ENCODE measurements at regions of chr3 and their contacts with region 1.

Region 1: GRCh38 chr3:194315088-194315964 is 35.8 kb downstream of the CPN2 start:
- DNase-seq: peak; percentile 88 to 93 (median 90)
- ATAC-seq: peak; percentile 93
- H3K4me3 ChIP-seq: peak overlapping the region; percentile 47
- H3K27ac ChIP-seq: peak overlapping the region; percentile 42; the same call in 1 of the 3 replicates
- H3K4me1 ChIP-seq: peaks cover 12 to 14% of the 10 kb centered on the region in 2 experiments
- H3K27me3 ChIP-seq: no peaks in the 10 kb centered on the region
- CTCF ChIP-seq: peak; percentile 87 to 94 (median 92)
- EP300 ChIP-seq: no peak
- POLR2A ChIP-seq: no peak
- RAD21 ChIP-seq: peak; percentile 97 to 99

Region 2: GRCh38 chr3:192802957-192803899 is 1512.1 kb before region 1 on chr3:
- CTCF ChIA-PET with region 1: no interaction called
- POLR2A ChIA-PET with region 1: no interaction called
- in situ Hi-C with region 1: loop called (anchors 25 kb)
- intact Hi-C with region 1: no loop called
- DNase-seq: peak in 2 of 4 experiments; percentile 31 to 34
- ATAC-seq: peak; percentile 71
- H3K4me3 ChIP-seq: no peak overlapping the region
- H3K27ac ChIP-seq: no peak overlapping the region
- H3K4me1 ChIP-seq: no peaks in the 10 kb centered on the region
- H3K27me3 ChIP-seq: no peaks in the 10 kb centered on the region
- CTCF ChIP-seq: peak; percentile 12 to 53 (median 48); a peak in 3 of 6 replicates
- EP300 ChIP-seq: no peak
- POLR2A ChIP-seq: no peak
- RAD21 ChIP-seq: peak; percentile 42 to 64; a peak in 3 of 4 replicates

Region 3: GRCh38 chr3:193465992-193466608 is 849.2 kb before region 1 on chr3:
- CTCF ChIA-PET with region 1: no interaction called
- POLR2A ChIA-PET with region 1: no interaction called
- in situ Hi-C with region 1: no loop called
- intact Hi-C with region 1: loop called (anchors 10 kb)
- DNase-seq: no peak
- ATAC-seq: no peak
- H3K4me3 ChIP-seq: no peak overlapping the region
- H3K27ac ChIP-seq: no peak overlapping the region
- H3K4me1 ChIP-seq: no peaks in the 10 kb centered on the region
- H3K27me3 ChIP-seq: no peaks in the 10 kb centered on the region; a peak in 2 of 5 replicates
- CTCF ChIP-seq: no peak
- EP300 ChIP-seq: no peak
- POLR2A ChIP-seq: no peak
- RAD21 ChIP-seq: no peak

Region 4: GRCh38 chr3:193780810-193781472 is 534.4 kb before region 1 on chr3:
- CTCF ChIA-PET with region 1: interaction called, 12 read pairs
- POLR2A ChIA-PET with region 1: interaction called, 5 read pairs
- in situ Hi-C with region 1: loop called (anchors 5 kb)
- intact Hi-C with region 1: loop called (anchors 2 kb)
- DNase-seq: peak; percentile 77 to 85 (median 78)
- ATAC-seq: peak; percentile 93
- H3K4me3 ChIP-seq: no peak overlapping the region
- H3K27ac ChIP-seq: no peak overlapping the region
- H3K4me1 ChIP-seq: peaks cover 10 to 22% of the 10 kb centered on the region in 2 experiments; a peak in 4 of 5 replicates
- H3K27me3 ChIP-seq: no peaks in the 10 kb centered on the region
- CTCF ChIP-seq: peak; percentile 86
- EP300 ChIP-seq: no peak
- POLR2A ChIP-seq: no peak
- RAD21 ChIP-seq: peak; percentile 93 to 96

Region 5: GRCh38 chr3:193946945-193947344 is 368.4 kb before region 1 on chr3:
- CTCF ChIA-PET with region 1: no interaction called
- POLR2A ChIA-PET with region 1: interaction called, 3 read pairs
- in situ Hi-C with region 1: no loop called
- intact Hi-C with region 1: loop called (anchors 10 kb)
- DNase-seq: no peak
- ATAC-seq: no peak
- H3K4me3 ChIP-seq: no peak overlapping the region
- H3K27ac ChIP-seq: no peak overlapping the region
- H3K4me1 ChIP-seq: peaks cover 22 to 27% of the 10 kb centered on the region in 2 experiments
- H3K27me3 ChIP-seq: no peaks in the 10 kb centered on the region
- CTCF ChIP-seq: no peak
- EP300 ChIP-seq: no peak
- POLR2A ChIP-seq: no peak
- RAD21 ChIP-seq: no peak

Region 6: GRCh38 chr3:194141415-194142155 is 173.7 kb before region 1 on chr3:
- CTCF ChIA-PET with region 1: no interaction called
- POLR2A ChIA-PET with region 1: interaction called, 48 read pairs
- in situ Hi-C with region 1: no loop called
- intact Hi-C with region 1: loop called (anchors 1 kb)
- DNase-seq: peak; percentile 89 to 91 (median 90)
- ATAC-seq: peak; percentile 71
- H3K4me3 ChIP-seq: peak overlapping the region; percentile 40
- H3K27ac ChIP-seq: peak overlapping the region; percentile 99
- H3K4me1 ChIP-seq: peaks cover 40 to 53% of the 10 kb centered on the region in 2 experiments
- H3K27me3 ChIP-seq: no peaks in the 10 kb centered on the region
- CTCF ChIP-seq: 0 out of 6 replicates have a peak, but pooled peaks of 1 of the 3 experiments have one; percentile 5
- EP300 ChIP-seq: no peak; the same call in 1 of the 2 replicates
- POLR2A ChIP-seq: peak; percentile 75
- RAD21 ChIP-seq: peak; percentile 40 to 47

Region 7: DNA sequence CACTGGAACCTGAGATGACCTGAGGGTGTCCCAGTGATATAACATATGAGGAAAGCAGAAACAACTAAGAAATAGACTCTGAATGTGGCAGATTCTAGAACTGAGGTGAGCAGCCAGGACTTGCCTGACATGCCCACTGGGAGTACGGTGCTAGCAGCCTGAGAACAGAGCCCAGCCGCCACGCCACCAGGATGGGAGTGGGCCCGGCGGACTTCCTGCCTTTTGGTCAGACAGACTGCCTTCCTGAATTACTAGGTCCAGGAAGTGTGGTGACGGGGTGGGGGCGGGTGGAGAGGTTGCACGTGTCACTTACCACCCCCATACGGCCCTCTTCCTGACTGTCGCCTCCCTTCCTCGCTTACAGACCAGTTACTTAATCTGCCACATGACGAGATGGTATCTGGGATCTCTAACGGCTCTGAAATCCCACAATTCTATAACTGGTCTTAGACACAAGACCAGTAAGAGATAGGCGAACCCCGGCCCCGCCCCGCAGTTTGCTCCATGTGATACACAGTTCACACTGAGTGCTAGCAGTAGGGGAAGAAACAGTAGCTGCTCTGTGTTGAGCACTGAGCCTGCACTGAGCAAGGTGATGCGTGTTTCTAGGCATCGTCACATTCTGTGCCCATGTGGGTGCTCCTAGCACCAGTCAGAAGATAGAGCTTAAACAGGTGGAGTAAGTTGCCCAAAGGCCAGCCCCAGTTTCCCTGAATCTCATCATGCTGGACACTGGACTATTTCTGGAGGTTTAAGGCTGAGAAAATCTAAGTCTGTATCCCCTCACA is 59.9 kb before region 1 on chr3:
- CTCF ChIA-PET with region 1: no interaction called
- POLR2A ChIA-PET with region 1: no interaction called
- in situ Hi-C with region 1: no loop called
- intact Hi-C with region 1: loop called (anchors 2 kb)
- DNase-seq: peak; percentile 92 to 98 (median 94)
- ATAC-seq: peak; percentile 96
- H3K4me3 ChIP-seq: peak overlapping the region; percentile 26
- H3K27ac ChIP-seq: peak overlapping the region; percentile 98
- H3K4me1 ChIP-seq: peaks cover 42 to 48% of the 10 kb centered on the region in 2 experiments
- H3K27me3 ChIP-seq: no peaks in the 10 kb centered on the region; a peak in 1 of 5 replicates
- CTCF ChIP-seq: no peak
- EP300 ChIP-seq: peak; percentile 100
- POLR2A ChIP-seq: peak; percentile 88
- RAD21 ChIP-seq: peak in 1 of 2 experiments; percentile 34; a peak in 3 of 4 replicates